IMR-90 (cell line): ENCODE measurements at regions of chr13 and their contacts with region 1.

Region 1: DNA sequence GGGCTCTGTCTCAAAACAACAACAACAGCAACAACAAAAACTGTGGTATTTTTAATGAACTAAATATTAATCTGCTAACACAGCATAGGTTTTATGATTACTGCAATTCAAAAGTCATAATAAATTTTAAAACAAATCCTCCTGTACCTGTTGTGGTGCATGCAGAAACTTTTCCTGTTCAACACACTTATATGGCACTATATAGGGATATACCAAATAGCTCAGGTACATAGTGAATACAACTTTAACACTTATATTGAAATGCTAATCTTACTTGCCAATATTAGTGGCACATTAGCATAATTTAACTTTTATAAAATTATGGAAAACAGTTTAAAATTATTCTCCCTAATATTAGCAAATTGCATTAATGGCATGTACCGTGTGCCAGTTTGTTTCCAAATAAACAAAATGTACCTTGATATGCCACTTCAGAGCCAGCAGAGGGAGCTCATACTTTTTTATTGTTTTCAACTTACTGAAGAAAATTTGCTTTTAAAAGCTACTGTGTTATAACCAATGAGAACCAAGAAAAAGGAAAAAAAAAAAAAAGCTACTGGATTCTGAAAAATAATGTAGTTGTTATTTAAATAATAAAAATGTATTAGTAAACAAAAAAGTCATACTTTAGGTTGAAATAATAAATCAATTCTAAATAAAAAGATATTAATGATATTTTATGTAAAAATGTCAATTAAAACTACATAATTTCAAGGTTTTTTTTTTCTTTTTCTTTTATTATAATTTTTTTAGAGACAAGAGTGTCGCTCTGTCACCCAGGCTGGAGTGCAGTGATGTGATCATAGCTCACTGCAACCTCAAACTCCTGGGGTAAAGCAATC is 18.0 kb upstream of the RBM26 start:
- DNase-seq: peak; percentile 63
- ATAC-seq: peak; percentile 75
- H3K4me3 ChIP-seq: no peak overlapping the region
- H3K27ac ChIP-seq: no peak overlapping the region
- H3K4me1 ChIP-seq: no peaks in the 10 kb centered on the region
- H3K27me3 ChIP-seq: no peaks in the 10 kb centered on the region
- CTCF ChIP-seq: peak; percentile 77
- POLR2A ChIP-seq: no peak
- RAD21 ChIP-seq: peak; percentile 77

Region 2: DNA sequence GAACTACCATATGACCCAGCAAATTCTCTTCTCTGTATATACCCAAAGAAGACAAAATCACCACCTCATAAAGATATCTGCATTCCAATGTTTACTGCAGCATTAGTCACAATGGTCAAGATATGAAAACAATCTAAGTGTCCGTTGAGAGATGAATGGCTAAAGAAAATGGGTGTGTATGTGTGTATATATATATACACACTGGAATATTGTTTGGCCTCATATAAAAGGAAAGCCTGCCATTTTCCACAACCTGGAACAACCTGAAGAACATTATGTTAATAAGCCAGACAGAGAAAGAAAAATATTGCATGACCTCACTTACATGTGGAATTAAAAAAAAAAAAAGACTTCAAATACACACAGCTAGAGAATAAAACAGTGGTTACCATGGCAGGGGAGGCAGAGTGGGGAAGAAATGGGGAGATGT is 11.6 kb after region 1 on chr13:
- CTCF ChIA-PET with region 1: interaction called, 17 read pairs
- POLR2A ChIA-PET with region 1: no interaction called
- dilution Hi-C with region 1: no loop called
- in situ Hi-C with region 1: no loop called
- intact Hi-C with region 1: no loop called
- DNase-seq: peak; percentile 68
- ATAC-seq: peak; percentile 84
- H3K4me3 ChIP-seq: no peak overlapping the region
- H3K27ac ChIP-seq: no peak overlapping the region
- H3K4me1 ChIP-seq: peaks cover 2% of the 10 kb centered on the region; the same call in 1 of the 2 replicates
- H3K27me3 ChIP-seq: no peaks in the 10 kb centered on the region
- CTCF ChIP-seq: no peak
- POLR2A ChIP-seq: no peak
- RAD21 ChIP-seq: no peak

Region 3: GRCh38 chr13:79480954-79481684 is 57.1 kb after region 1 on chr13 and contains the start of gene NDFIP2:
- CTCF ChIA-PET with region 1: interaction called, 7 read pairs
- POLR2A ChIA-PET with region 1: no interaction called
- dilution Hi-C with region 1: no loop called
- in situ Hi-C with region 1: no loop called
- intact Hi-C with region 1: loop called (anchors 5 kb)
- DNase-seq: peak; percentile 80
- ATAC-seq: peak; percentile 90
- H3K4me3 ChIP-seq: peak within 1 kb of the TSS; percentile 68
- H3K27ac ChIP-seq: peak within 1 kb of the TSS; percentile 11
- H3K4me1 ChIP-seq: no peaks in the 10 kb centered on the region
- H3K27me3 ChIP-seq: peaks cover 8% of the 10 kb centered on the region
- CTCF ChIP-seq: no peak
- POLR2A ChIP-seq: peak; percentile 75
- RAD21 ChIP-seq: no peak
- total RNA-seq, gene NDFIP2: 25.8 and 48.9 TPM in 2 replicates

Region 4: DNA sequence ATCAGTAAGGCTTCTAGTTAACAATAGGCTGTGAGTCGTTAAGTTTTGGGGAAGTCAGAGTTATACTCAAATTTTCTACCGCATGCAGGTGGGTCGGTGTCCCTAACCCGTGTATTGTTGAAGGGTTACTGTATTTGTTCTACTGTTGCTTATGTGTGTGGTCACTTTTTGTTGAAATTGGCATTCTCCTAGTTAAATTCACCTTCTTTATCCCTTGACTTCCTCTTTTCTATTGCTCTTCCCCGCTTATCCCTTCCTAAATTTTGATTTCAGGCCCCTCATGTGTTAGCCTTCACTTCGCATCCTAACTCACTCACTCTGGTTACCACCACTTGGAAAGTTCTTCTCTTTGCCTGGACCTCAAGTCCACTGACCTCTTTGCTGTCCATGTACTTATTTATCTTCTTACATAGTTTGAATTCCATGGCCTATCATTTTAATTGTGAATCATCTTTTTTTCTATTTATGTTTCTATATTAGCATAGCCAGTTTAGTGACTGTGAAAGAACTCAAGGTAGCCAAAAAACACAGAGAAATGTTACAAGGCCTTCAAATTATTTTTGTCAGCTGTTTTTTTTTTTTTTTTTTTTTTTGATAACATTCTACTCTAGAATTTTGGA is 109.9 kb after region 1 on chr13:
- CTCF ChIA-PET with region 1: interaction called, 10 read pairs
- POLR2A ChIA-PET with region 1: no interaction called
- dilution Hi-C with region 1: loop called (anchors 25 kb)
- in situ Hi-C with region 1: no loop called
- intact Hi-C with region 1: no loop called
- DNase-seq: peak; percentile 47
- ATAC-seq: peak; percentile 83
- H3K4me3 ChIP-seq: no peak overlapping the region
- H3K27ac ChIP-seq: no peak overlapping the region
- H3K4me1 ChIP-seq: peaks cover 6% of the 10 kb centered on the region; the same call in 1 of the 2 replicates
- H3K27me3 ChIP-seq: no peaks in the 10 kb centered on the region
- CTCF ChIP-seq: no peak
- POLR2A ChIP-seq: no peak
- RAD21 ChIP-seq: no peak

Region 5: GRCh38 chr13:79541426-79542049 is 117.5 kb after region 1 on chr13:
- CTCF ChIA-PET with region 1: interaction called, 41 read pairs
- POLR2A ChIA-PET with region 1: interaction called, 3 read pairs
- dilution Hi-C with region 1: loop called (anchors 25 kb)
- in situ Hi-C with region 1: loop called (anchors 5 kb)
- intact Hi-C with region 1: loop called (anchors 1 kb)
- DNase-seq: peak; percentile 73
- ATAC-seq: peak; percentile 68
- H3K4me3 ChIP-seq: no peak overlapping the region
- H3K27ac ChIP-seq: no peak overlapping the region
- H3K4me1 ChIP-seq: no peaks in the 10 kb centered on the region
- H3K27me3 ChIP-seq: no peaks in the 10 kb centered on the region
- CTCF ChIP-seq: peak; percentile 83
- POLR2A ChIP-seq: no peak
- RAD21 ChIP-seq: peak; percentile 85